Psoas muscle (tissue), 8 donors: ENCODE measurements at regions of chr4 and their contacts with region 1.

Region 1: GRCh38 chr4:17234678-17235077 is 277.2 kb downstream of the QDPR start:
- DNase-seq: no peak
- ATAC-seq: no peak
- H3K4me3 ChIP-seq: no peak overlapping the region
- H3K27ac ChIP-seq: no peak overlapping the region
- H3K4me1 ChIP-seq: no peaks in the 10 kb centered on the region
- H3K27me3 ChIP-seq: no peaks in the 10 kb centered on the region
- CTCF ChIP-seq: no peak

Region 2: GRCh38 chr4:17187003-17187402 is 47.7 kb before region 1 on chr4:
- intact Hi-C with region 1: loop called in 1 of 2 experiments (anchors 1 kb)
- DNase-seq: no peak
- ATAC-seq: no peak
- H3K4me3 ChIP-seq: no peak overlapping the region
- H3K27ac ChIP-seq: no peak overlapping the region
- H3K4me1 ChIP-seq: no peaks in the 10 kb centered on the region
- H3K27me3 ChIP-seq: no peaks in the 10 kb centered on the region
- CTCF ChIP-seq: no peak

Region 3: DNA sequence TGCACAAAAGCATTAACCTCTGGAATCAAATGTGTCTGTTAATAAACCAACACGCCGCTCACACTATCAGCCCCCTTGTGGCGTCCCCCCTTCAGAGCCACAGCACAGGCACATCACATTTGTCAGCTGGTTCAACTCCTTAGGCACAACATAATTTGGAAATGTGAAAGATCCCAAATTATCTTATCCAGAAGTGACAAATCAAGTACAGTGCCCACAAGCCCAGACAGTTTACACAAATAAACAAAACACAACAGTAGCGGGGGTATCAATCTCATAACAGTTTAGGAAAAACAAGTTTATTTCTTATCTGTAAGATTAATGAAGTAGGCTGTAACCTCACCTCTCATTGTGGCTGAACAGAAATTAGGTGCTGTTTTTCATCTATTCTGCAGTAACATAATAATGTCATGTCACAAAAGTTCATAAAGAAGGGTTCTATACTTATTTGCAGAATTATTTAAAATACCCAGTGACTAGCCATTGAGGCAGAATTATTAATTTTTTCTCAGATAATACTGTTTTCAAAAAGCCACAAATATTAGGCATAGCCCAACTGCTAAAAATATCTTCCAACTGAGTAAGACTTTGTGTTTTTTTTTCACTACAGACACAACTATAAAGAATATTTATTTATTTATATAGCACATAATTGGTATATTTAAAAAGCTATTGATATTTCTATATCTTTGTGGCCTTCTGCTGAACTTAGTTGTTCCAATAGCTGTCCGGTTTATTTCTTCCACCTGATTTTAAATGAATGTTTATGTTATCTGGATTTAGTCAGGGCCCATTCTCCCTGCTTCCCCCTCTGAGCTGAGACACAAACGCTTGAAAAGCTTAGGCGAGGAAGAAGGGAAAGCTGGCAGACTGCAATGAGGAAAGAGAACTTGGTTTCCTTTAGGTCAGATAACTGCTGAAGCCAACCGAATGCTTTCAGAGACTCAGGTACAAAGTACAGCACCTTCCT is 62.5 kb after region 1 on chr4:
- intact Hi-C with region 1: no loop called
- DNase-seq: no peak
- ATAC-seq: no peak
- H3K4me3 ChIP-seq: no peak overlapping the region
- H3K27ac ChIP-seq: no peak overlapping the region
- H3K4me1 ChIP-seq: no peaks in the 10 kb centered on the region
- H3K27me3 ChIP-seq: no peaks in the 10 kb centered on the region
- CTCF ChIP-seq: no peak

Region 4: GRCh38 chr4:17327591-17327990 is 92.9 kb after region 1 on chr4:
- intact Hi-C with region 1: no loop called
- DNase-seq: no peak
- ATAC-seq: no peak
- H3K4me3 ChIP-seq: no peak overlapping the region
- H3K27ac ChIP-seq: no peak overlapping the region
- H3K4me1 ChIP-seq: peaks cover 3% of the 10 kb centered on the region
- H3K27me3 ChIP-seq: no peaks in the 10 kb centered on the region
- CTCF ChIP-seq: no peak

Region 5: DNA sequence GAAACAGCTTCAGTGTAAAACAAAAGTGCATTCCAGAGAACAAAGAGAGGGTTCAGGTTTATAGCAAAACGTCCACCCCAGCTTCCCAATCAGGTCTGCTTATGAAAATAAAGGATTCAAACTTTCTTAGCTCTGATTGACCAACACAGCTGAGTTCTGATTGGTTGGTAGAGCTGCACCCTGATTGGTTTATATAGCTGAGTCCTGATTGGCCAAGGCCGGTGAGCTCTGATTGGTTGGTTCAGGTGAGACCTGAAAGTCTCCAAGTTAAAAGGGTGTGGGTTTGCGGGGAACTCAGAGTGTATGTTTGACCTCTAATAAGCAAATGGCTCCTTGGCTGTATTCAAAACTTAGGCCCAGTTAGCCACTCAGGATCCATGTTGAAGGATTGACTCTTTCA is 301.2 kb after region 1 on chr4:
- intact Hi-C with region 1: no loop called
- DNase-seq: no peak
- ATAC-seq: no peak
- H3K4me3 ChIP-seq: no peak overlapping the region
- H3K27ac ChIP-seq: no peak overlapping the region
- H3K4me1 ChIP-seq: no peaks in the 10 kb centered on the region
- H3K27me3 ChIP-seq: no peaks in the 10 kb centered on the region
- CTCF ChIP-seq: no peak

Region 6: DNA sequence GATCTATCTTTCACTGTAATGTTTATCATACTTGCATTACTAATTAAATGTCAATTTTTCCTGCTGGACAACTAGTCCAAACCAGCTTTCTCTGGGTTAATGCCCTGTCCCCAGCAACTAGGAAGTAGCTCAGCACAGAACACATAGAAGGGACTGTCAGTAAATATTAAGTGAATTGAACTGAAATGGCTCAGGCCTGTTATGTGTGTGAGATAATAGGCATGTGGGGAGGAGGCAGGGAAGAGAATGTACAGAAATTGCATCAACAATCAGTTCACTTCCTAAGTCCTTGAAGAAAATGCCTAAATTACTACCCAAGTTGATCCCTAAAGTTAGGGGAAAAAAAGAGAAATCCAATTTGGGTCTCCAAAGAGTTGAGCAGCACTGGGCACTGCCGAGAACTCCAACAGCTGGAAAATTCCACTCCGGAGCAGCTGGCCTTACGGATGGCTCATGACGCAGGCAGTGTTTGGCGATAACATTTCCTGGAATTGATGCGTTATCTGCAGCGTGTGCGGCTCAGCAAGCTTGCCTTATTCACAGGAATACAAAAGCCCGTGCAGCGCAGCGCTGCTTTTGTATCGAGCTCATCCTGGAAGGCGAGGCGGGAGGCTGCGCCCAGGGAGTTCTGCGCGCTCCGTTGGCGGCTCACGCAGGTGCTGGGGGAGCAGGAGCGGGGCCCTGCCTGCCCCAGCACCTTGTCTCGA is 1084.2 kb after region 1 on chr4:
- intact Hi-C with region 1: no loop called
- DNase-seq: peak in 1 of 2 donors; percentile 18
- ATAC-seq: peak in 2 of 4 donors; percentile 21
- H3K4me3 ChIP-seq: peak overlapping the region; percentile 12
- H3K27ac ChIP-seq: no peak overlapping the region
- H3K4me1 ChIP-seq: no peaks in the 10 kb centered on the region
- H3K27me3 ChIP-seq: no peaks in the 10 kb centered on the region
- CTCF ChIP-seq: no peak